Mammary epithelial cell (primary cell): ENCODE measurements at regions of chr9 and their contacts with region 1.

Region 1: GRCh38 chr9:107172160-107172978 is 110.7 kb upstream of the RAD23B start:
- DNase-seq: peak; percentile 64
- H3K4me3 ChIP-seq: no peak overlapping the region
- H3K27ac ChIP-seq: no peak overlapping the region
- H3K4me1 ChIP-seq: no peaks in the 10 kb centered on the region
- H3K27me3 ChIP-seq: no peaks in the 10 kb centered on the region
- CTCF ChIP-seq: peak; percentile 91 to 95

Region 2: GRCh38 chr9:105842023-105842644 is 1330.2 kb before region 1 on chr9:
- CTCF ChIA-PET with region 1: no interaction called
- dilution Hi-C with region 1: no loop called
- in situ Hi-C with region 1: no loop called
- intact Hi-C with region 1: loop called (anchors 5 kb)
- DNase-seq: peak; percentile 27
- H3K4me3 ChIP-seq: no peak overlapping the region
- H3K27ac ChIP-seq: no peak overlapping the region
- H3K4me1 ChIP-seq: no peaks in the 10 kb centered on the region
- H3K27me3 ChIP-seq: peaks cover 4% of the 10 kb centered on the region
- CTCF ChIP-seq: peak; percentile 88 to 90

Region 3: GRCh38 chr9:105901514-105902109 is 1270.8 kb before region 1 on chr9:
- CTCF ChIA-PET with region 1: no interaction called
- dilution Hi-C with region 1: no loop called
- in situ Hi-C with region 1: no loop called
- intact Hi-C with region 1: loop called (anchors 1 kb)
- DNase-seq: peak; percentile 37
- H3K4me3 ChIP-seq: no peak overlapping the region
- H3K27ac ChIP-seq: no peak overlapping the region
- H3K4me1 ChIP-seq: no peaks in the 10 kb centered on the region
- H3K27me3 ChIP-seq: no peaks in the 10 kb centered on the region
- CTCF ChIP-seq: peak; percentile 72 to 93

Region 4: GRCh38 chr9:106432631-106433030 is 739.7 kb before region 1 on chr9:
- CTCF ChIA-PET with region 1: no interaction called
- dilution Hi-C with region 1: no loop called
- in situ Hi-C with region 1: loop called in 1 of 2 experiments (anchors 25 kb)
- intact Hi-C with region 1: loop called (anchors 1 kb)
- DNase-seq: peak; percentile 63
- H3K4me3 ChIP-seq: no peak overlapping the region
- H3K27ac ChIP-seq: no peak overlapping the region
- H3K4me1 ChIP-seq: peaks cover 6% of the 10 kb centered on the region
- H3K27me3 ChIP-seq: no peaks in the 10 kb centered on the region
- CTCF ChIP-seq: peak; percentile 21 to 37

Region 5: GRCh38 chr9:106697750-106698502 is 474.4 kb before region 1 on chr9:
- CTCF ChIA-PET with region 1: no interaction called
- dilution Hi-C with region 1: no loop called
- in situ Hi-C with region 1: no loop called
- intact Hi-C with region 1: no loop called
- DNase-seq: peak; percentile 62
- H3K4me3 ChIP-seq: peak overlapping the region; percentile 17 to 38 (median 36)
- H3K27ac ChIP-seq: no peak overlapping the region
- H3K4me1 ChIP-seq: peaks cover 12% of the 10 kb centered on the region
- H3K27me3 ChIP-seq: no peaks in the 10 kb centered on the region
- CTCF ChIP-seq: no peak

Region 6: GRCh38 chr9:107102677-107103076 is 69.7 kb before region 1 on chr9:
- CTCF ChIA-PET with region 1: interaction called, 12 read pairs
- dilution Hi-C with region 1: no loop called
- in situ Hi-C with region 1: no loop called
- intact Hi-C with region 1: no loop called
- DNase-seq: no peak
- H3K4me3 ChIP-seq: no peak overlapping the region
- H3K27ac ChIP-seq: no peak overlapping the region
- H3K4me1 ChIP-seq: no peaks in the 10 kb centered on the region
- H3K27me3 ChIP-seq: no peaks in the 10 kb centered on the region
- CTCF ChIP-seq: no peak

Region 7: GRCh38 chr9:107251756-107252322 is 79.5 kb after region 1 on chr9:
- CTCF ChIA-PET with region 1: no interaction called
- dilution Hi-C with region 1: no loop called
- in situ Hi-C with region 1: no loop called
- intact Hi-C with region 1: no loop called
- DNase-seq: peak; percentile 44
- H3K4me3 ChIP-seq: no peak overlapping the region
- H3K27ac ChIP-seq: no peak overlapping the region
- H3K4me1 ChIP-seq: peaks cover 34% of the 10 kb centered on the region
- H3K27me3 ChIP-seq: no peaks in the 10 kb centered on the region
- CTCF ChIP-seq: no peak

Region 8: DNA sequence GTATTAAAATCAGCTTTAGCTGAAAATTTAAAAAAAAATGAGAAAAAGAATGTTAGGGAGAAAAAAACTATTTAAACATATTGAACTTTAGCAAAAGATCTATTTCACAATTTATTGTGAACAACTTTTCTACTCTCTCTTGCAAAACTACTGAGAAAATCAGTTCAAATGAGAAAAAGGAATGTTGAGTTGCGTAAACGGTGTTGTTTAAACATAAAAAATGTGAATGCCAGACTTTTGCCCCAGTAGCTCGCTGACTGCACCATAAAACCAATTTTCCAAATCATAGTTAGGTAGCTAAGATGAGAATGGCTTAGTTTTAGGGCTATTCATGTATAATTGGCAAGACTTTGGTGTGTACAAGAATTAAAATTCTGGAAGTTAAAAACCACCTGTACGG is 97.3 kb after region 1 on chr9:
- CTCF ChIA-PET with region 1: no interaction called
- dilution Hi-C with region 1: loop called (anchors 5 kb)
- in situ Hi-C with region 1: no loop called
- intact Hi-C with region 1: no loop called
- DNase-seq: no peak
- H3K4me3 ChIP-seq: no peak overlapping the region
- H3K27ac ChIP-seq: no peak overlapping the region
- H3K4me1 ChIP-seq: peaks cover 33% of the 10 kb centered on the region
- H3K27me3 ChIP-seq: no peaks in the 10 kb centered on the region
- CTCF ChIP-seq: no peak